Panc1 (cell line): ENCODE measurements at regions of chr22 and their contacts with region 1.

Region 1: DNA sequence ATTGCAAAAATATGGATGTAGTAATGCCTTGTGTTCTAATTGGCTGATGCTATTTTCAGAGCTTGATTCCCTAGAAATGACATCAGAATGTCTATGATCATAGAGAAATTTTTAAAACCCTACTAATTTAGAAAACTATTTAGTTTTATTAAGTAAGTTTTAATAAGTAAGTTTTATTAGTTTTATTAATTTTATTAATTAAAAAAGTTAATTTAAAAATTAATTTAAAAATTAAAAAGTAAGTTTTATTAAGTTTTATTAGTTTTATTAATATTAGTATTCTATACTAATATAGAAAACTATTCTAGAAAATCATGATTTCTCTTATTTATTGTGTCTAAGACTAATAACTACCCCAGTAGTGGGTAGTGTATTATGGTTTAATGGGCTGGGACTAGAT is 8.2 kb downstream of the HORMAD2 start:
- DNase-seq: no peak
- ATAC-seq: no peak
- H3K4me3 ChIP-seq: no peak overlapping the region
- H3K27ac ChIP-seq: no peak overlapping the region
- H3K4me1 ChIP-seq: no peaks in the 10 kb centered on the region
- H3K27me3 ChIP-seq: no peaks in the 10 kb centered on the region
- CTCF ChIP-seq: no peak

Region 2: GRCh38 chr22:29689206-29689879 is 399.1 kb before region 1 on chr22:
- CTCF ChIA-PET with region 1: interaction called, 11 read pairs
- POLR2A ChIA-PET with region 1: no interaction called
- in situ Hi-C with region 1: no loop called
- intact Hi-C with region 1: no loop called
- DNase-seq: no peak
- ATAC-seq: no peak
- H3K4me3 ChIP-seq: no peak overlapping the region
- H3K27ac ChIP-seq: no peak overlapping the region
- H3K4me1 ChIP-seq: no peaks in the 10 kb centered on the region; the same call in 1 of the 2 replicates
- H3K27me3 ChIP-seq: no peaks in the 10 kb centered on the region
- CTCF ChIP-seq: no peak

Region 3: GRCh38 chr22:30187529-30188407 is 99.3 kb after region 1 on chr22:
- CTCF ChIA-PET with region 1: no interaction called
- POLR2A ChIA-PET with region 1: interaction called, 17 read pairs
- in situ Hi-C with region 1: no loop called
- intact Hi-C with region 1: no loop called
- DNase-seq: no peak
- ATAC-seq: no peak
- H3K4me3 ChIP-seq: no peak overlapping the region
- H3K27ac ChIP-seq: peak overlapping the region; percentile 59
- H3K4me1 ChIP-seq: peaks cover 7% of the 10 kb centered on the region
- H3K27me3 ChIP-seq: no peaks in the 10 kb centered on the region
- CTCF ChIP-seq: no peak